Thyroid gland (tissue), 4 donors: ENCODE measurements at regions of chr14 and their contacts with region 1.

Region 1: GRCh38 chr14:45134051-45134958 is at the start of gene FKBP3:
- DNase-seq: peak; percentile 98
- H3K4me3 ChIP-seq: peak within 1 kb of the TSS; percentile 6 to 78 (median 61)
- H3K27ac ChIP-seq: peak within 1 kb of the TSS; percentile 65 to 75 (median 68)
- H3K4me1 ChIP-seq: peaks cover 9 to 14% of the 10 kb centered on the region in 2 donors
- H3K27me3 ChIP-seq: no peaks in the 10 kb centered on the region
- CTCF ChIP-seq: no peak
- POLR2A ChIP-seq: peak; percentile 24 to 84
- total RNA-seq, gene FKBP3: 12.3 to 45.1 (median 40.9) TPM

Region 2: GRCh38 chr14:44912041-44912869 is 222.1 kb before region 1 on chr14:
- intact Hi-C with region 1: loop called (anchors 5 kb)
- DNase-seq: peak in 1 of 2 donors; percentile 10
- H3K4me3 ChIP-seq: peak overlapping the region in 2 of 3 donors; percentile 15 to 44
- H3K27ac ChIP-seq: no peak overlapping the region
- H3K4me1 ChIP-seq: peaks cover 3 to 14% of the 10 kb centered on the region in 2 donors
- H3K27me3 ChIP-seq: no peaks in the 10 kb centered on the region
- CTCF ChIP-seq: no peak
- POLR2A ChIP-seq: no peak

Region 3: DNA sequence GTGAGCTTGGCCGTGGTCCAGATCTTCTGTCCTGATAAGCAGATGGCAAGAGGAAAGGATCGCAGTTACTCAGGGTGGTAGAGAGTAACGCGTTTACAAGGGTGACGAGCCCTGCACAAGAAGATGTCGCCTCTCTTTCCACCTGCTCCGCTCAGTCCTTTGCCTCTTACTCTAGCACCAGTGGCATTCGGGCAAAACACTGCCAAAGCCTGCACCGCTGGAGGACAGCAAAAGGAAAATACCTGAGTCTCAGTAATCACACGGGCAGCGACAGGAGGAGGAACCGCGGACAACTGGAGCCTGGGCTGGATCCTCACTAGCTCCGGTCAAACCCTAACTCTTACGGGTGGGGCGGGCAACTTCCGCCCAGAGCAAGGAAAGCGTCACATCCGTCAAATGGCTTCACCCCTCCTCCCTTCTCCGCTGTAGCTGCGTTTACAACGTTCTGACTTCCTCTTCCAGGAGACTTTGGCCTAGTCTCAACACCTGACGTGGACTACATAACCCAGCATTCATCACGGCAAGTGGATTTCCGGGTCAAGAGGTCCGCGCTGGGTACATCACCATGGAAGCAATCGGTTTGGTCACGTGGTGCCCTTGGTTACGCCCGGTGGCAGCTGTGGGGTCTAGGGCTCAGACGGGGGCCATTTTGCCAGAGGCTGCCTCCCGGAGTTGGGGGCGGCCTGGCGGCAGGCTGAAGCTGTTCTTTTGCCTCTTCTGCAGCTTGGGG is 172.5 kb before region 1 on chr14 and contains the starts of genes KLHL28 and TOGARAM1:
- intact Hi-C with region 1: loop called (anchors 5 kb)
- DNase-seq: peak; percentile 99
- H3K4me3 ChIP-seq: peak within 1 kb of the TSS; percentile 63 to 86 (median 83)
- H3K27ac ChIP-seq: peak within 1 kb of the TSS; percentile 80 to 87 (median 80)
- H3K4me1 ChIP-seq: peaks cover 18 to 41% of the 10 kb centered on the region in 2 donors
- H3K27me3 ChIP-seq: no peaks in the 10 kb centered on the region
- CTCF ChIP-seq: no peak
- POLR2A ChIP-seq: peak; percentile 65 to 95
- total RNA-seq, gene KLHL28: 12.0 to 21.0 (median 13.3) TPM
- total RNA-seq, gene TOGARAM1: 30.3 to 54.8 (median 36.2) TPM

Region 4: GRCh38 chr14:44979740-44980356 is 154.5 kb before region 1 on chr14:
- intact Hi-C with region 1: no loop called
- DNase-seq: peak; percentile 44 to 60
- H3K4me3 ChIP-seq: no peak overlapping the region
- H3K27ac ChIP-seq: no peak overlapping the region
- H3K4me1 ChIP-seq: peaks cover 6 to 18% of the 10 kb centered on the region in 2 donors
- H3K27me3 ChIP-seq: no peaks in the 10 kb centered on the region
- CTCF ChIP-seq: no peak
- POLR2A ChIP-seq: no peak

Region 5: GRCh38 chr14:45070215-45070614 is 64.1 kb before region 1 on chr14:
- intact Hi-C with region 1: no loop called
- DNase-seq: no peak
- H3K4me3 ChIP-seq: no peak overlapping the region
- H3K27ac ChIP-seq: no peak overlapping the region
- H3K4me1 ChIP-seq: no peaks in the 10 kb centered on the region
- H3K27me3 ChIP-seq: no peaks in the 10 kb centered on the region
- CTCF ChIP-seq: no peak
- POLR2A ChIP-seq: no peak

Region 6: GRCh38 chr14:45083971-45084722 is 50.2 kb before region 1 on chr14 and contains the start of gene PRPF39:
- intact Hi-C with region 1: loop called (anchors 10 kb)
- DNase-seq: peak; percentile 96 to 97
- H3K4me3 ChIP-seq: peak within 1 kb of the TSS; percentile 41 to 62 (median 50)
- H3K27ac ChIP-seq: peak within 1 kb of the TSS; percentile 59 to 71 (median 69)
- H3K4me1 ChIP-seq: peaks cover 5 to 24% of the 10 kb centered on the region in 2 donors
- H3K27me3 ChIP-seq: no peaks in the 10 kb centered on the region
- CTCF ChIP-seq: no peak
- POLR2A ChIP-seq: peak; percentile 65 to 91
- total RNA-seq, gene PRPF39: 33.2 to 47.0 (median 37.6) TPM

Region 7: DNA sequence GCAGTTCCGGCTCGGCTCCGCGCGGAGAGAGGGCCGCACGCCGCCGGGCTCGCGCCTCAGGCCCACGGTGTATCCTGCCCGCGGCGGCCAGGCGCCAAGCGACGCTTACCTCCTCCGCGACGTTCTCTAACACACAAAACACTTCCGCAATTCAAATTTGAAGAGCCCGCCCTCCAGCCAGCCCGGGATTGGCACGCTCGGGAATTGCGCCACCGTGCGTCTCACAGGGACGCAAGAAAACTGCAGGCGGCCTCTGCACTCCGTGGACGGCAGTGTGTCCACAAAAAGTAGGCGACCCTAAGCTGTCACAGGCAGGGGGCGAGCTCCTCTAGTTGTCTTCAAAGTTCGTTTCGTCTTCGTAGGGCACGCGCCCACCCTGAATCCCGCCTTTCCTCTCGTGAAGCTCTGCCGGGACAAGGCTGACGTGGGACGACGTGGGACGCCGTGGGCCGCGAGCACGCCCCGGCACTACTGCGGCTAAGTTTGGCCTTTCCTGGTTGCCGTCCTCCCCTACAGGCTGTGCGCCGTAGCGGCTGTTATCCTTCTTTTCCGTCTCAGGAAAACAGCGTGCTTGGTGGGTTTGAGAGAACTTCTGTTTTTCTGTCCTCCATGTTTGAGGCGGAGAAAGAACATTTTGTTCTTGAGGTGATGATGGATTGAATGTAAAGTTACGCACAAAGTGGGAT is 118.9 kb after region 1 on chr14 and contains the start of gene MIS18BP1:
- intact Hi-C with region 1: loop called (anchors 10 kb)
- DNase-seq: peak; percentile 96 to 97
- H3K4me3 ChIP-seq: peak within 1 kb of the TSS; percentile 29 to 94 (median 56)
- H3K27ac ChIP-seq: peak within 1 kb of the TSS; percentile 91 to 97 (median 92)
- H3K4me1 ChIP-seq: peaks cover 0 to 5% of the 10 kb centered on the region in 2 donors
- H3K27me3 ChIP-seq: no peaks in the 10 kb centered on the region
- CTCF ChIP-seq: peak; percentile 40 to 81 (median 72)
- POLR2A ChIP-seq: peak in 1 of 2 donors; percentile 64
- total RNA-seq, gene MIS18BP1: 26.5 to 44.9 (median 34.7) TPM